H1 (cell line): ENCODE measurements at regions of chr1 and their contacts with region 1.

Region 1: GRCh38 chr1:62746085-62746808 is 37.7 kb upstream of the ATG4C start:
- DNase-seq: no peak
- H3K4me3 ChIP-seq: no peak overlapping the region
- H3K27ac ChIP-seq: no peak overlapping the region
- H3K4me1 ChIP-seq: no peaks in the 10 kb centered on the region
- H3K27me3 ChIP-seq: no peaks in the 10 kb centered on the region
- CTCF ChIP-seq: peak in 2 of 3 experiments; percentile 46 to 49; a peak in 2 of 4 replicates
- EP300 ChIP-seq: no peak
- POLR2A ChIP-seq: no peak
- RAD21 ChIP-seq: peak; percentile 81 to 87

Region 2: GRCh38 chr1:62508187-62508758 is 238.0 kb before region 1 on chr1:
- CTCF ChIA-PET with region 1: interaction called, 17 read pairs
- POLR2A ChIA-PET with region 1: no interaction called
- DNase-seq: no peak
- H3K4me3 ChIP-seq: no peak overlapping the region
- H3K27ac ChIP-seq: no peak overlapping the region
- H3K4me1 ChIP-seq: no peaks in the 10 kb centered on the region
- H3K27me3 ChIP-seq: no peaks in the 10 kb centered on the region
- CTCF ChIP-seq: peak in 1 of 3 experiments; percentile 60; a peak in 2 of 4 replicates
- EP300 ChIP-seq: no peak
- POLR2A ChIP-seq: no peak
- RAD21 ChIP-seq: peak; percentile 54 to 56

Region 3: DNA sequence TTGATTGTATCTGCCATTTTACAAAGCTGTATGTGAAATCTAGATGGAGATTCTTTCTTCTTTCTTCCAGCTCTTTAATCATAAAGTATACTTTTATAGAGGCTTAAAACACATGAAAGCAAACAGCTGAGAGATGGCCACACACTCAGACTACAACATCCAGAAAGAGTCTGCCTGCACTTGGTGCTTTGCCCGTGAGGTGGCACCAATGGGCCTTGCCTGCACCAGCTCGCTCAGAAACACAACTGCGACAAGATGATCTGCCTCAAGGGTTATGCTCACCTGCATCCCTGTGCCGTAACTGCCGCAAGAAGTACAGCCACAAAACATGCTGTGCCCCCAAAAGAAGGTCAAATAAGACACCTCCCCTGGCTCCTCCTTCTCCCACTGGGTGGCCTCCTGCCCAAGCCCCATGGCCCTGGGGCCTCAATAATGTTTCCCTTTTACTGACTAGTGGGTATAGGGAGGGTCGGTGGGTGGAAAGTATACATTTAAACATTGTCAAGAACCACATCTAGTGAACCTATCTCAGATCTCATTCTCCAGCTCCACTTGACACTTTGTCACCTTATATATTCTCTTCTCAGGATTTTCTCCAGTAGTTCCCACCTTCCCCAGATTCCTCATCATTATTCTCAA is 215.6 kb before region 1 on chr1:
- CTCF ChIA-PET with region 1: interaction called, 50 read pairs
- POLR2A ChIA-PET with region 1: no interaction called
- DNase-seq: peak; percentile 60 to 75
- H3K4me3 ChIP-seq: no peak overlapping the region
- H3K27ac ChIP-seq: no peak overlapping the region
- H3K4me1 ChIP-seq: no peaks in the 10 kb centered on the region
- H3K27me3 ChIP-seq: peaks cover 0 to 1% (median 0%) of the 10 kb centered on the region in 4 experiments; a peak in 1 of 7 replicates
- CTCF ChIP-seq: peak; percentile 85 to 97 (median 96)
- EP300 ChIP-seq: no peak
- POLR2A ChIP-seq: no peak
- RAD21 ChIP-seq: peak; percentile 97 to 98

Region 4: DNA sequence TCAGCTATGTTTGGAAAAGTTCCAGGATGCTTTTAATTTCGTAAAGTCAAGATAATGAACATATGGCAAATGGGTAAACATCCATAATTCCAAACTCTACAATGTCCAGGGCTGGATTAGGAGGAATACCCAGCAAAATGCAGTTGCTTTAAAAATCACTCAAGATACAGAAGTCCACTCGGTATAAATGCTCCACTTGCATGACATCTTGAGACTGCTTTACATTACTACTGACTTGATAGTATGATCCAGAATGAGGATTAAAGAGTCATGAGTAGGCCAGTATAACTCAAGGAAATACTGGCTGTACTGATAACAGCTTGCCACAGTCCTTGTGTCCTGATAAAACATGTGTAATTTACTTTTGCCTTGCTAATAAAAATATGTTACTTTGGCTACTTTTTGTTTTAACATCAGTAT is 207.2 kb before region 1 on chr1:
- CTCF ChIA-PET with region 1: interaction called, 17 read pairs
- POLR2A ChIA-PET with region 1: no interaction called
- DNase-seq: no peak
- H3K4me3 ChIP-seq: no peak overlapping the region
- H3K27ac ChIP-seq: no peak overlapping the region
- H3K4me1 ChIP-seq: peaks cover 0 to 5% (median 2%) of the 10 kb centered on the region in 4 experiments; a peak in 2 of 7 replicates
- H3K27me3 ChIP-seq: no peaks in the 10 kb centered on the region
- CTCF ChIP-seq: no peak
- EP300 ChIP-seq: no peak
- POLR2A ChIP-seq: no peak
- RAD21 ChIP-seq: no peak

Region 5: DNA sequence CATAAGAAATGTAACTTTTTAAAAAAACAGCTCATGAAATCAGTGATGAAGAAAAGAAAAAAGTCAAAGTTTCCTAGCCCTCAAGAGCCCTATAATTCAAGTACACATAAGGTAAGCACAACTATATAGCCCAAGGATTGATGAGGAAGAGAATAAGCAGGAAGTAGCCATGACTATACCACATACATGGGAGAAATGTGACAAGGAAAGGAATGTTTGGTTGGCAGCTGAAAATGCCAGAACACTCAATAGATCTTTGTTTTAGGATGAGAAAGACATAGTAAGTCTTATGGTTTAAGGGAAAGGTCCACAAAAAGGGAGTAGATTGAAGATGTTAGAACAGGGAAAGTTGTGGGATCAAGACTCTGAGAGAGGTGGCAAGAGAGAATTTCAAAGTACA is 63.7 kb before region 1 on chr1:
- CTCF ChIA-PET with region 1: no interaction called
- POLR2A ChIA-PET with region 1: no interaction called
- DNase-seq: no peak
- H3K4me3 ChIP-seq: no peak overlapping the region
- H3K27ac ChIP-seq: no peak overlapping the region
- H3K4me1 ChIP-seq: peaks cover 0 to 4% (median 1%) of the 10 kb centered on the region in 4 experiments; a peak in 3 of 7 replicates
- H3K27me3 ChIP-seq: no peaks in the 10 kb centered on the region
- CTCF ChIP-seq: no peak
- EP300 ChIP-seq: no peak
- POLR2A ChIP-seq: no peak
- RAD21 ChIP-seq: no peak

Region 6: GRCh38 chr1:62722796-62723195 is 23.5 kb before region 1 on chr1:
- CTCF ChIA-PET with region 1: interaction called, 10 read pairs
- POLR2A ChIA-PET with region 1: no interaction called
- DNase-seq: no peak
- H3K4me3 ChIP-seq: no peak overlapping the region
- H3K27ac ChIP-seq: no peak overlapping the region
- H3K4me1 ChIP-seq: peaks cover 0 to 5% (median 0%) of the 10 kb centered on the region in 4 experiments; a peak in 1 of 7 replicates
- H3K27me3 ChIP-seq: no peaks in the 10 kb centered on the region
- CTCF ChIP-seq: no peak
- EP300 ChIP-seq: no peak
- POLR2A ChIP-seq: no peak
- RAD21 ChIP-seq: no peak

Region 7: DNA sequence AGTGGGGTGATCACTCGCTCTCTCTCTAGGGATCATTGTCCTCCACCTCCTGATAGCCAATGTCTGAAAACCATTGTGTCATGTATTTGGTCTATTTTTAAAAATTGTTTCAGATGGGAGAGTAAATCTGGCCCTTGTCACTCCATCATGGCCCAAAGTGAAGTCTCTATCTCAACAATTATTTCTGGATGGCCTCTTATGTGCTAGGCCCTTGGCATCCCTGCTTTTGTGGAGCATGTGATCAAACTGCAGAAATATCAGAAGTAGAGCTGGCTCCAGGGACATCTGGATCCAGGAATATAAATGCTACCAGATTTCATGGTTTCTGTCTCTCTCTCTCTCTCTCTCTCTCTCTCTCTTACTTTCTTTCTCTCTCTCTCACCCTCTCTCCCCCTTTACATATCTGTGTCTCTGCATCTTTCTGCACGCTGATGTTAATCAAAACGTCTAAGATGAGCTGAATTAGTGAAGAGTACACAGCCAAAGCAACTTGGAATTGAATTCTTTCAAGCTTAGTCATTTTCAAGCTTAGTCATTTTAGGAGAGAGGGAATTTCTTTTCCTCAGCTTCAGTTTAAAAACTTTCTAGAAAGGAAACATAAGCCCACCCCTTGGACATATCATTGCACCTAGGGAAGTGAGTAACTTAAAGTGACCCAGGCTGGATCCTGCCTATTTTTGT is 10.6 kb before region 1 on chr1:
- CTCF ChIA-PET with region 1: interaction called, 15 read pairs
- POLR2A ChIA-PET with region 1: no interaction called
- DNase-seq: no peak
- H3K4me3 ChIP-seq: no peak overlapping the region
- H3K27ac ChIP-seq: no peak overlapping the region
- H3K4me1 ChIP-seq: no peaks in the 10 kb centered on the region
- H3K27me3 ChIP-seq: no peaks in the 10 kb centered on the region
- CTCF ChIP-seq: no peak
- EP300 ChIP-seq: no peak
- POLR2A ChIP-seq: no peak
- RAD21 ChIP-seq: no peak